Activated T-helper 2 cell treated with anti-CD3 and anti-CD28 coated beads, Interferon-gamma antibody, Interleukin-2, Interleukin-4, amounts not matched to agents 10 μg/mL and 5 μg/mL and 100 μg/mL, durations not matched to agents 14 hours and 24 hours and 36 hours (primary cell): ENCODE measurements at regions of chr11 and their contacts with region 1.

Region 1: GRCh38 chr11:62556108-62556871 is 9.7 kb upstream of the AHNAK start:
- DNase-seq: peak; percentile 87
- H3K4me3 Mint-ChIP-seq: peak overlapping the region; percentile 56
- H3K27ac Mint-ChIP-seq: peak overlapping the region; percentile 97
- H3K4me1 Mint-ChIP-seq: peaks cover 84% of the 10 kb centered on the region
- H3K27me3 Mint-ChIP-seq: no peaks in the 10 kb centered on the region

Region 2: DNA sequence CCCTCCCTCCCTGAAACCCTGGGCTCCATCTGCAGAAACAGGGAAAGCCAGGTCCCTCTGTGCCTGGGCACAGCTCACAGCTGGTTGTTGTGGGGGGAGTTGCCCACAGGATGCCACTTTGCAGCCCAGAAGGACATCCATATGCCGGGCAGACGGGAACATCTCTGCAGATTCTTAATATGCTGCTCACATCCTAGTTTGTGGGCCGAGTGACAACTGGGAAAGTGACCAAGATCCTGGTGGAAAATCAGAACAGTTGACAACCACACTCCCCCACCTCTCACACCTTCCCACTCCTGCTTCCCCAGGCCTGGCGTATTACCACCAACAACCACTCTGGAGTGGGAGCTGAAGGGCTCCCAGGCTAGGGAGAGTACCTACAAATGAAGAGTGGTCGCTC is 144.8 kb before region 1 on chr11:
- intact Hi-C with region 1: no loop called
- DNase-seq: no peak
- H3K4me3 Mint-ChIP-seq: no peak overlapping the region
- H3K27ac Mint-ChIP-seq: no peak overlapping the region
- H3K4me1 Mint-ChIP-seq: no peaks in the 10 kb centered on the region
- H3K27me3 Mint-ChIP-seq: no peaks in the 10 kb centered on the region

Region 3: GRCh38 chr11:62427630-62428233 is 128.6 kb before region 1 on chr11:
- intact Hi-C with region 1: loop called (anchors 1 kb)
- DNase-seq: peak; percentile 26
- H3K4me3 Mint-ChIP-seq: peak overlapping the region; percentile 43
- H3K27ac Mint-ChIP-seq: peak overlapping the region; percentile 89
- H3K4me1 Mint-ChIP-seq: peaks cover 53% of the 10 kb centered on the region
- H3K27me3 Mint-ChIP-seq: no peaks in the 10 kb centered on the region

Region 4: GRCh38 chr11:62508268-62509058 is 47.8 kb before region 1 on chr11:
- intact Hi-C with region 1: loop called (anchors 5 kb)
- DNase-seq: no peak
- H3K4me3 Mint-ChIP-seq: no peak overlapping the region
- H3K27ac Mint-ChIP-seq: no peak overlapping the region
- H3K4me1 Mint-ChIP-seq: peaks cover 2% of the 10 kb centered on the region
- H3K27me3 Mint-ChIP-seq: peaks cover 16% of the 10 kb centered on the region

Region 5: DNA sequence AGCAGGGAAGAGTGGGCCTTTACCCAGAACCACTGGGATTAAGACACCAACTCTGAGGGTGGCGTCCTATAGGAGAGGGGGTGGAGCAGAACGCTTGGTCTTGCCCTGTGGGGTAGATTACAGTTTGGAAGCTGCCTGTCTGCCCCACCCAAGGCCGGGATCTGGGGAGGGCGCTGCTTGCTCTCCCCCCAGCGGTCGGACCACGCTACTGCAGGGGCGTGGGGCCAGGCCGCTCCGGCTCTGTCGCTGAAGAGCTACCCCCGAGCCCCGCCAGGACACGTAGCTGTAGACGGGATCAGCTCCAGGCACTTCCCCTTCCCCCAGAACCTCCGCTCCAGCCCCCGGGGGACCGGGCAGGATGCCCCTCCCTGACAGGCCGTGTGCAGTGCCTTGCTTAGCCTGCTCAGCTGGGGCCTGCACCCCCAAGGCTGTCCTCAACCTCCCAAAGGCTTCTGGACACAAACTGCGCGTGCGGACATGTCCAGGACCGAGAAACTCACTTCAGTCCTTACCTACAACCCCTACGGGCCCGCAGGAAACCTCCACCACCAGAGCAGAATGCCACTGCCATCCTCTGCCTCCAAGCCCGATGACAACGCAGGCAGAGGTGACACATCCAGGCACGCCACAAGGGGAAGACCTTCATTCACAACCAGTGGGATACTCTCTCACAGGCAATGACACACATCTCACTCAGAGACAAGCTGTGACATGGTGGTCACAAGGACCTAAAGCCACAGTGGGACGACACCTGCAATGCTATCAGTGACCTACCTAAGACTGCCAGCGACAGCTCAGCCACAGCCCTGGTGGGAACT is 13.3 kb before region 1 on chr11:
- intact Hi-C with region 1: loop called (anchors 1 kb)
- DNase-seq: peak; percentile 68
- H3K4me3 Mint-ChIP-seq: peak overlapping the region; percentile 95
- H3K27ac Mint-ChIP-seq: peak overlapping the region; percentile 55
- H3K4me1 Mint-ChIP-seq: peaks cover 71% of the 10 kb centered on the region
- H3K27me3 Mint-ChIP-seq: peaks cover 5% of the 10 kb centered on the region

Region 6: DNA sequence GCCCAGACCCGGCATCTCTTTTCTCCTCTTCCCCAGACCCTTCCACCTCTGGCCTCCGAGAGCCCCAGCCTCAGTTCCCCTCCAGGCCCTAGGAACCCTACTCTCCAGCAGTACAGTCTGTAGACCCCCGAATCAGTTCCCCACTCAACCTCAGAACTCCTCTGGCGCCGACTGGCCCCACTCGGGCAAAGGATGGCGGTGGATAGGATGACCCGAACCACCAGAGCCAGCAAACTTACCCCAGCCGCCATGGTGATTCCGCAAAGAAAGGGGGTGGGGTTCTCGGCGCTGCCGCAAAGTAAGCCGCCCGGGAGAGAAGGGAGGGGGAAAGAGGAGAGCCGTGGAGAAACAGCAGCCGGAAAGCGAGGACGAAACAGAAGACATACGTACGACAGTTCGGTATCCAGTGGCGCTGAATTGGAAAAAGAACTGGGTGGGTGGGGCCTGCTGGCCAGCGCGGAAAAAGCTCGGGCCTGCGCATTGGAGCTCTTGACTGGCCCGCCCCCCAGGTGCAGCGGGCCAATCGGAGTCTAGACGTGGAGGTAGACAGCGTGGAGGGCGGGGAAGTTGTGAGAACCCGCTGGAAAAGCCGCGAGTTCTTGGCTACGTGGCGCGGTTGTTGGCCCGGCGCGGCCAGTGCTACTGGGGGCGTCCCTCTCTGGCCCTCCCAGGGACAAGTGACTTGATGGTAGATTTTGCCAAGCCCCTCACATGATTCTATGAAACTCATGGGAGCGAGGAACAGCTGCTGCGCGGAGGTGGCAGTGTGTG is 17.5 kb after region 1 on chr11 and contains the start of gene EEF1G:
- intact Hi-C with region 1: loop called (anchors 2 kb)
- DNase-seq: peak; percentile 99
- H3K4me3 Mint-ChIP-seq: peak within 1 kb of the TSS; percentile 92
- H3K27ac Mint-ChIP-seq: peak within 1 kb of the TSS; percentile 95
- H3K4me1 Mint-ChIP-seq: peaks cover 35% of the 10 kb centered on the region
- H3K27me3 Mint-ChIP-seq: no peaks in the 10 kb centered on the region
- total RNA-seq, gene EEF1G: 1,369 and 1,395 TPM in 2 replicates

Region 7: DNA sequence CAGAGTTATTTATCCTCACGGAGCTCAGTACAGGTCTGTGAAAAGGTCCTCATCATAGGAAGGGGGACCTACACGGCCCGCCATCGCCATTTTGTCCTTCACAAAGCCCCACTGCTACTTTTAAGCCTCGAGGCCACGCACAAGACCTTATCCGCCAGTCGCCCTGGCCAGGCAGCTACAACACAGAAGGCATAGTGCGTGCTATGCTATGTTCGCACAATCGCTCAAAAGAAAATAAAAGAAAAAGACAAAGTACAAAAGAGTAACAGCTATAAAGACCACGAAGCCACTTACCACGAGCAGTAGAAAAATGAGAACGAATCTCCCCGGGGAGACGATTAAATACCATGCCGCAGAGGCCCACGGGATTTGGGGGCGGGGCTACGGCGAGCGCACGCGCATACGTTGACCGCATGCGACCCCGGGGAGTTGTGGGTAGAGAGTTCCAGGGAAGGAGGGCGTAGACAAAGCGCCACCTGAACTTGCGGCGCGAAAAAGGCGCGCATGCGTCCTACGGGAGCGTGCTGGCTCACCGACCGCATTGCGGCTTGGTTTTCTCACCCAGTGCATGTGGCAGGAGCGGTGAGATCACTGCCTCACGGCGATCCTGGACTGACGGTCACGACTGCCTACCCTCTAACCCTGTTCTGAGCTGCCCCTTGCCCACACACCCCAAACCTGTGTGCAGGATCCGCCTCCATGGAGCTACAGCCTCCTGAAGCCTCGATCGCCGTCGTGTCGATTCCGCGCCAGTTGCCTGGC is 299.5 kb after region 1 on chr11:
- intact Hi-C with region 1: loop called (anchors 10 kb)
- DNase-seq: peak; percentile 98
- H3K4me3 Mint-ChIP-seq: peak overlapping the region; percentile 96
- H3K27ac Mint-ChIP-seq: peak overlapping the region; percentile 96
- H3K4me1 Mint-ChIP-seq: peaks cover 45% of the 10 kb centered on the region
- H3K27me3 Mint-ChIP-seq: no peaks in the 10 kb centered on the region

Region 8: DNA sequence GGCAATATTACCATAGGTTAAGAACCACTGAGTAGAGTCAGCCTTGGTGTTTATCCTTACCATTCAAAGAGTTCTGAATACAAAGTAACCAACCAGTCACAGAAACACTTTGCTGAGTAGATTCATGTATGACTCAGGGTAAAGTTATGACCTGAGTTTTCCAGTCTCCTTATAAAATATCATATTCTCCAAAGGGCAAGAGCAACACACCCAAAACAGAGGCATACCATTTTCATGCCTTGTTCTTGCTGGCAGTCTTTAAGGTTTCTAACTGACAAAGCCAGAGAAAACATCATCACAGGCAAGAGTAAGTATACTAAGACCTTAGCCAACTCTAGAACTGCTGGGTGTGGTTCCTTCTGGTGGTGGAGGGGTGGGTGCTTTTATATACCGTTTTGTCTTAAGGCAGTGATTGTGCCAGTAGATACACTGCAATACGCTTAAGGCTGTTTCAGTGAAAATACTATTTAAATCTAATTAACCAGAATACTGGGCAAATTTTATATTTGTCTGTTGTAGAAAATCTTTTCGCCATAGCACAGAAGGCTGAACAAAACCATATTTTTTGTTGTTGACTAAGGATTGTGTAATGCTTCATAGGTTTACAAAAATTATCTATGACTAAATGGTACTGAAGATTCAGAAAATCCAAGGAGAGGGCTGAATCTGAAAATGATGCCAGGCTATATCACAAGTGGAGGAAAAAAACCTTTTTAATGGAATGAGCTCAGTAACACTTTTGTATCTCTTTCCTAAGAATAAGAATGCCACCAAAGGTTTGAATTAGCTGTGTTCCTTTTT is 1111.9 kb after region 1 on chr11:
- intact Hi-C with region 1: no loop called
- DNase-seq: no peak
- H3K4me3 Mint-ChIP-seq: peak overlapping the region; percentile 13
- H3K27ac Mint-ChIP-seq: peak overlapping the region; percentile 31
- H3K4me1 Mint-ChIP-seq: peaks cover 27% of the 10 kb centered on the region
- H3K27me3 Mint-ChIP-seq: no peaks in the 10 kb centered on the region